Right ventricle myocardium inferior (tissue), 1 donor: ENCODE measurements at regions of chr3 and their contacts with region 1.

Region 1: DNA sequence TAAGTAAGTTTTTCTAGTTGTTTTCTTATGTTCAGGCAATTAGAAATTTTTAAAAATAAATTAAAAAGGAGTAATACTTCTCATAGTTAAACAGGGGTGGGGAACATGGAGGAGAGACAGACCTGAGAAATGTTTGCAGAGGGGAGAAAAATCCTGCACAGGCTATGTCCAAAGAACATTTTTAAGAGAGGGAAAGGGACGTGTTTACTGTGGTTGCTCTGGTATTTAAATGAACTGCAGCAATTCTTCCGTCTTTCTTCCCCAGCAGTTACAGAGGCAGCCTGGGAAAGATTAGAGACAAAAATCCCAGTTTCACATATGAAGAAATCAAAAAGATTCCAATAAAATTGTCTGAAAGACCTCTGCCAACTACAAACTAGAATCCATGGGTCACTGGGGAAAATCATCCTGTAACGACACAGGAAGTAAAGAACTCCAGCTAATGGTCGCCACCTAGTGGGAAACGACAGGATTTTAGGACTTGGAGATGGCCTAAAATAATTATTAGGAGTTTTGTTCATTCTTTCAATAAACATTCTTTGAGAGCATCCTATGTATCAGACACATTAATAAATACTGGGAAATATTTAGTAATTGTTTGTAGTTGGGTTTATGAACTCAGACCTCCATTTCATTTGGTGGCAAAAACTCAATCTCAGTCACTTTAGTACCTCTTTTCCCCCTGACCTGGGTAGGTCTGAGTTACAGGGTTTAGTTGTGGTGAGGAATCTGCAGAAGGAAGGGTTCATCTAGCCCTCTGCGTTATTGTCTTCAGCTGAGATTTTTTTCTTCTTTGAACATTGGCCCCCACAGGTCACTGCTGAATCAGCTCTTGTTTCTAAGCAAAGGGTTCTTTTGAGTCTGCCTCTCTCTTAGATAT is 69.9 kb upstream of the GOLIM4 start:
- DNase-seq: no peak
- ATAC-seq: peak; percentile 56

Region 2: DNA sequence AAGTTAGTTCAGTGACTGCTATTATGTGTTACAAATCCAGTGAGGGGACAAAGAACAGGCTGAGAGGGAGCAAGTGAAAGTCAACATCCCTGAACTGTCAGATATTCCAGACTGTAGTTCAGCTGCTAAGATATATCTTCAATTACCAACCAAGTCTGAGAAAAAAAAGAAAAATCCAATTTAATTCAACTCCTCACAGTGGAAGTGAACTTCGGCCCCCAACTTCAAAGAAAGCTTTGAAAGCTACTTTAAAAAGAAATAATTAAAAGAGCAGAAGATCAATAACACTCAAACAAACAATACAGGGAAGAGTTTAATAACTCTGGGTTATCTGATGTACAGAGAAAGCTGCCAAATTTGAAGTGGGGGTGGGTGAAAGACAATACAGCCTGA is 256.1 kb before region 1 on chr3:
- intact Hi-C with region 1: no loop called
- DNase-seq: no peak
- ATAC-seq: no peak

Region 3: DNA sequence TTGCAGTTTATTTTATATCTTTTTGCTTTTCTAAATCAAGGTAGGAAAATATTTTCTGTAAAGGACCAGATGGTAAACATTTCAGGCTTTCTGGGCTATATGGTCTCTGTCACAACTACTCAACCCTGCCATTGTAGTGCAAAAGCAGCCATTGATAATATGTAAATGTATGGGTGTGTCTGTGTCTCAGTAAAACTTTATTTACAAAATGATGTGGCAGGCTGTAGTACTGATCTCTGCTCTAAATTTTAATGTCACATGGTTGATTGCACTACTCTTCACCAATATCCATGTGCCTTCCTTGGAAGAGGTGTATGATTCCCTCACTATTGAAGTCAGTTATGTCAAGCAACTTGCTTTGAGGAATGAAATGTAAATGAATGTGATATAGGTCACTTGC is 244.9 kb before region 1 on chr3:
- intact Hi-C with region 1: loop called (anchors 5 kb)
- DNase-seq: no peak
- ATAC-seq: no peak

Region 4: DNA sequence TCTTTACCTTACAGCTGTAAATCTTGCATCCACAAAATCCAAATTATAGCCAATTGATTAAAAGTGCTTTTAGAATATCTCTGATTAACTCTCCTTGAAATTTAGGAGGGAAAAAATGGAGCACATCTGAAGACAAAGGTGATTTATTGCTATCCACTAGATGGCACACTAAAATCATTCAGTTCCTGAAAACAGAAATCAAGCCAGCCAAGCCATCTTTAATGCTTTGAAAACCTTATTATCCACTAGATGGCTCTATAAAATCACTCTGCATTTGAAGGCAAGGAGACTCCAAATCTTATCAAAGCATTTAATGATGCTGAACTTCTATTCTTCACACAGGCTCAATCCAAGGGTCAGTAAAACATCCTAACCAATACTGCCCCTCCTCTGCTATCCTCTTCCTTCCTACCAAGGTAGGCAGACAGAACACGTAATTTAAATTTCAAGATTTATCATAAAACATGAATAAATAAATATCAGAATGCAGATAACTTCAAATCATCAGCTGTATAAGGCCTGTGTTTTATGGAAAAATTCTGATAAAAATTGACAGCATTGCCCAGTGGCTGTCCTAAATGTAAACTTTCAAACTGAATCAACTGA is 118.3 kb before region 1 on chr3:
- intact Hi-C with region 1: loop called (anchors 1 kb)
- DNase-seq: no peak
- ATAC-seq: peak; percentile 77

Region 5: GRCh38 chr3:168095611-168096209 is 69.9 kb before region 1 on chr3 and contains the start of gene GOLIM4:
- intact Hi-C with region 1: loop called (anchors 10 kb)
- DNase-seq: peak; percentile 97
- ATAC-seq: peak; percentile 97
- total RNA-seq, gene GOLIM4: 57.3 TPM

Region 6: GRCh38 chr3:168121184-168122017 is 44.2 kb before region 1 on chr3:
- intact Hi-C with region 1: loop called (anchors 2 kb)
- DNase-seq: peak; percentile 59
- ATAC-seq: peak; percentile 76

Region 7: DNA sequence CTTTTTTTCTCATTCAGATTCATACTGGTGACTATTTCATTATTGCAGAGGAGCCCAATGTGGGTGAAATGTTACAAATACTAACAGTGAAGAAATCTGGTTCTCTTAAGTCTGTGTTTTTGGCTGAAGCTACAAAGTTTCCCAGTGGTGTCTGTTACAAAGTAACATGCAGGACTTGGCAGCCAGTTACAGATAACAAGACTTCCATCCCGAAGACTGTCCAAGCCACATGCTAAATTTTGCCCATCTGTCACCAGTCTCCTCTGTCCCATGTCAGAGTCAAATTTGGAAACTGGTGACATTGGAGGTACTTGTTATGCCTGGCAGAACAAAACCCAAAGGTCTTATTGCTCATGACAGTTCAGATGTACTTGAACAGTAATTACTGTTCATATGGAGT is 199.3 kb after region 1 on chr3:
- intact Hi-C with region 1: no loop called
- DNase-seq: no peak
- ATAC-seq: peak; percentile 96